ENCODE measurements at regions of chr1 and their contacts with region 1.

Region 1: DNA sequence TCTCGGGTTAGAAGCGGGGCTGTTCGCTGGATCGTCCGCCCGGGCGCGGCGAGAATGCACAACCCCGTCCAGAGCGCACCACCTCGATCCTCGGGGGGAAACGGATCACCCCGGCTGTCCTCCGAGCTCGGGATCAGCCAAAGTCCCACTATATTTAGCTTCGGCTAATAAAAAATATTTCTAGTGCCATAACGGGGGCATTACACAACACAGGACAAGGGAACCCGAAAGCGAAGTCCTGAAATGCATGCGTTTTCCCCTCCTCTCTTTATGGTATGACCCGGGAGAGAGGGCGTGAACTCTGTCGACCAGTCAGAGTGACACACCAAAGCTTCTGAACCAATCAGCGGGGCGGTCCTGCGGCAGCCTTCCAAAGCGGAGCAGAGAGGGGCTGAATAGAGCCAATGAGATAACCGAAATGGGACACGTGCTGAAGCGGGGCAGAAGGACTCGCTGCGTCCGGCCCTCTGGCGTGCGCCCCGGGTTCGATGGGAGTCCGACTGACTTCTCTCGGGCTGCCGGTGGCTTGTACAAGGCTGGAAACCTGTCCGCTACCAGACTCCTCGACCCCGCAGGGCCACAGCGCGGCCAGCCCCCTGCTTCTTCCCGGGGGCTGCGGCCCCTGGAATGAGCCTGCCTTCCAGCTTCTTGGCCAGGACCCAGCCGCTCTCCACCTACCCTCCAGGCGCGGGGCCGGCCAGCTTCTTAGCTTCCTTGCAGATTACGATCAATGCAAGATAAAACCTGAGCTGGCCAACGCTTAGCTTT is at the start of gene ALDH4A1:
- DNase-seq: peak; percentile 96

Region 2: DNA sequence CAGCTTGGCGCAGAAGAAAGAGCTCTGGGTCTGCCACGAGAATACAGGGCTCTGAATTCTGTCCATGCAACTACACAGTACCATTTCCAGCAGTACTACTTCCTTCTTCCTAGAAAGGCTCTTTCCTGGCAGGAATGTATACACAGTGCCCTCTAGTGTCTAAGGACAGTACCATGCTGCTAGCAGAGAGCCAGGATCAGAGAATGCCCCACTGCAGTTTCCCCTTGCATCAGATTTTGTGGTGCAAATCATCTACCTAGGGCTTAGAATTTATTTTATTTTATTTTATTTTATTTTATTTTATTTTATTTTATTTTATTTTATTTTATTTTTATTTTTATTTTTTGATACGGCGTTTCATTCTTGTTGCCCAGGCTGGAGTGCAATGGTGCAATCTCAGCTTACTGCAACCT is 221.3 kb before region 1 on chr1:
- in situ Hi-C with region 1: no loop called
- DNase-seq: peak; percentile 10

Region 3: GRCh38 chr1:19096036-19096833 is 193.5 kb after region 1 on chr1:
- in situ Hi-C with region 1: loop called (anchors 25 kb)
- DNase-seq: peak; percentile 24

Region 4: DNA sequence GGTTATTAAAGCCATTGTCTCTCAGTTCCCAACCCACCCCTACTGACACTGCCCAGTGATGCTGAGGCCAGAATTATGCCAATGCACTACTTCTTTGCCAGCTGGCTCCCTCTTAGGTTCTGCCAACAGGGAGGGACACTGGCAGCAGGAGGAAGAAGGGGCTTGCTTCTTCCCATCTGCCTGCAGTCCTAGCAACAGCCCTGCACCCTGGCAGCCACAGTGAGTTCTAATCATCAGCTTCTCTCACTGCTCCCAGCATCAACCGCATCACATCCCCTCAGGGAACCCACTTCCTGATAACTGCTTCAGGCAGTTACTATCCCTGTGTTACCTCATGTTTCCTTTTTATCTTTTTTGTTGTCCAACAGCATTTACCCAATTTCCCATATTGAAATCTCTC is 221.1 kb after region 1 on chr1:
- in situ Hi-C with region 1: no loop called
- DNase-seq: peak; percentile 78